Activated CD4-positive, alpha-beta memory T cell treated with anti-CD3 and anti-CD28 coated beads for 36 hours (primary cell): ENCODE measurements at regions of chr3 and their contacts with region 1.

Region 1: DNA sequence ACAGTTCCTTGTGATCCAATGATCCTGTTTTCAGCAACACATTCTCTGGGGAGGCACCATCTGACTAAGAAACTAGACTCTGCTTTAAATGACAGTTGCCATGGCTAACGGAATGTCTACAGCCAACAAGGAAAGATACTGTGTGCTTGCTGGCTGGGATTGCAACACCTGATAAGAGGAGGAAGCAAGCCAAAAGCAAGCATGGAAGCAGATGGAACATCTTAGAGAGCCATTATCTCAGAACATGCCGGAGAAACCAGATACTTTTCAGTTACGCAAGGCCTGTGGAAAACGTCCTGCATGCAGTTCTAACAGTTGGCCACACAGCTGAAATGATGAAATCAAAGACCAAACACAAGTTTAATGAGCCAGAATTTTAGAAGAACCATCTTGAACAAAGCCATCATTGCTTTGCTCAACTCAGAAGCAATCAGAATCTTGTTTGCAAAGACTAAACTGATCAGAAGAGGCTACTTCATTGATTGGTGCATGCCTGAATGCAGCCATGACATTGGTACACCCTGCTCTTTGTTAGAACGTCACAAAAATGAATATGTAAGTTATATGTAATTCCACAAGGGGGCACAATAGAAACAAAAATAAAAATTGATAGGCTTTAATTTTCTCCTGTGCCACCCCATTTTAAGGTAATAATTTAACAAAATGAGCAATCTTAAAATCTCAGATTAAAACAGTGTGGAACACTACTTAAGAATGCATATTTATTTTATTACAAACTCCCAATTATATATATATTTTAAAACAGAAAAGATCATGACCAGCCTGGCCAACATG is 50.8 kb downstream of the GXYLT2 start:
- DNase-seq: peak; percentile 34
- H3K4me3 Mint-ChIP-seq: no peak overlapping the region
- H3K27ac Mint-ChIP-seq: no peak overlapping the region
- H3K4me1 Mint-ChIP-seq: peaks cover 3% of the 10 kb centered on the region
- H3K27me3 Mint-ChIP-seq: peaks cover 2% of the 10 kb centered on the region

Region 2: GRCh38 chr3:72634128-72634527 is 304.5 kb before region 1 on chr3:
- CTCF ChIA-PET with region 1: no interaction called
- POLR2A ChIA-PET with region 1: no interaction called
- intact Hi-C with region 1: no loop called
- DNase-seq: no peak
- H3K4me3 Mint-ChIP-seq: no peak overlapping the region
- H3K27ac Mint-ChIP-seq: peak overlapping the region; percentile 70
- H3K4me1 Mint-ChIP-seq: peaks cover 43% of the 10 kb centered on the region
- H3K27me3 Mint-ChIP-seq: peaks cover 4% of the 10 kb centered on the region

Region 3: GRCh38 chr3:72810659-72811434 is 127.8 kb before region 1 on chr3:
- CTCF ChIA-PET with region 1: no interaction called
- POLR2A ChIA-PET with region 1: no interaction called
- intact Hi-C with region 1: no loop called
- DNase-seq: no peak
- H3K4me3 Mint-ChIP-seq: no peak overlapping the region
- H3K27ac Mint-ChIP-seq: no peak overlapping the region
- H3K4me1 Mint-ChIP-seq: no peaks in the 10 kb centered on the region
- H3K27me3 Mint-ChIP-seq: no peaks in the 10 kb centered on the region

Region 4: GRCh38 chr3:73086071-73086494 is 147.4 kb after region 1 on chr3:
- CTCF ChIA-PET with region 1: interaction called, 34 read pairs
- POLR2A ChIA-PET with region 1: no interaction called
- intact Hi-C with region 1: loop called (anchors 1 kb)
- DNase-seq: peak; percentile 62
- H3K4me3 Mint-ChIP-seq: no peak overlapping the region
- H3K27ac Mint-ChIP-seq: no peak overlapping the region
- H3K4me1 Mint-ChIP-seq: peaks cover 11% of the 10 kb centered on the region
- H3K27me3 Mint-ChIP-seq: no peaks in the 10 kb centered on the region